ENCODE measurements at regions of chr4 and their contacts with region 1.

Region 1: DNA sequence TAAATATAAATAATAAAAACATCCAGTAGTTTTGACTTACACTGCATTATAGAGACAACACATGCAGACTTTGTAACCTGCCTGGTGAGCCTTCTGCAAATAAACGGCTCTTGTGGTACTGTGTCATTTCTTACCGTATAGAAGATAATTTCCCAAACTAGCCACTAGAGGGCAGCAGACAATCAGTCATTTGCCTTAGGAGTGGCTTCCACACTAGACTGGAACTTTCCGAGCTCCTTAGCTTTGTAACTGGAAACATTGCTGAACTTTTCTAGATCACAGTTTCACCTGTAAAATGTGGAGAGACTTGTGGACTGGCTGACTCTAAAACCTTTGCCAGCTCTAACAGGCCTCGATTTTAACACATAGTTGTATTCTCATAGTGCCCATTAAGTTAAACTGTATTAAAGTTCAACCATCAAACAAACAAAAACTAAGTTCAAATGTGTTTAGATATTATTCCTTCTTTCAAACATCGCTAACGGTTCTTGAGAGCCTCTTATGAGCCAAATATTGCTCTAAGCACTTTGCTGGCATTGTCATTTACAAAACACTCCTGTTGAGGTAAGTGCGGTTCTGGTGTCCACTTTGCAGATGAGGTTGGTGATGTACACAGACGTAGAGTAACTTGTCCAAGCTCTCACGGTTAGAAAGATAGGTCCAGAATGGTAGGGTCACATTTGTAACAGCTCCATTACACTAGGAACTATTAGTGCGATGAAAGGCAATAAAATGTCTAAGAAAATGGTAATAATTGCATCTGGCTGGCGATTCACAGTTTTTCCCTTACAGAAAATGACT is 345.5 kb downstream of the ANK2 start:
- DNase-seq: peak in 1 of 2 donors; percentile 32
- ATAC-seq: peak; percentile 95
- H3K4me3 ChIP-seq: no peak overlapping the region
- H3K27ac ChIP-seq: no peak overlapping the region
- H3K4me1 ChIP-seq: peaks cover 2 to 3% of the 10 kb centered on the region in 2 donors
- H3K27me3 ChIP-seq: no peaks in the 10 kb centered on the region

Region 2: GRCh38 chr4:113445286-113445685 is 50.4 kb after region 1 on chr4:
- intact Hi-C with region 1: loop called in 1 of 2 experiments (anchors 2 kb)
- DNase-seq: peak; percentile 74 to 75
- ATAC-seq: peak; percentile 93
- H3K4me3 ChIP-seq: no peak overlapping the region
- H3K27ac ChIP-seq: peak overlapping the region; percentile 67 to 82
- H3K4me1 ChIP-seq: peaks cover 2 to 3% of the 10 kb centered on the region in 2 donors
- H3K27me3 ChIP-seq: no peaks in the 10 kb centered on the region

Region 3: GRCh38 chr4:113502476-113502875 is 107.5 kb after region 1 on chr4:
- intact Hi-C with region 1: no loop called
- DNase-seq: no peak
- ATAC-seq: no peak
- H3K4me3 ChIP-seq: no peak overlapping the region
- H3K27ac ChIP-seq: no peak overlapping the region
- H3K4me1 ChIP-seq: peaks cover 0 to 2% of the 10 kb centered on the region in 2 donors
- H3K27me3 ChIP-seq: no peaks in the 10 kb centered on the region

Region 4: GRCh38 chr4:113539408-113539807 is 144.5 kb after region 1 on chr4:
- intact Hi-C with region 1: loop called (anchors 5 to 10 kb)
- DNase-seq: no peak
- ATAC-seq: no peak
- H3K4me3 ChIP-seq: no peak overlapping the region
- H3K27ac ChIP-seq: peak overlapping the region in 1 of 2 donors; percentile 28
- H3K4me1 ChIP-seq: peaks cover 0 to 6% of the 10 kb centered on the region in 2 donors
- H3K27me3 ChIP-seq: no peaks in the 10 kb centered on the region

Region 5: GRCh38 chr4:113761620-113762185 is 366.8 kb after region 1 on chr4 and contains the start of gene CAMK2D:
- intact Hi-C with region 1: loop called (anchors 2 to 5 kb)
- DNase-seq: peak; percentile 91 to 93
- ATAC-seq: peak; percentile 90
- H3K4me3 ChIP-seq: peak within 1 kb of the TSS; percentile 51 to 77
- H3K27ac ChIP-seq: peak within 1 kb of the TSS; percentile 64 to 90
- H3K4me1 ChIP-seq: no peaks in the 10 kb centered on the region
- H3K27me3 ChIP-seq: no peaks in the 10 kb centered on the region
- total RNA-seq, gene CAMK2D: 52.3 to 71.8 TPM

Region 6: DNA sequence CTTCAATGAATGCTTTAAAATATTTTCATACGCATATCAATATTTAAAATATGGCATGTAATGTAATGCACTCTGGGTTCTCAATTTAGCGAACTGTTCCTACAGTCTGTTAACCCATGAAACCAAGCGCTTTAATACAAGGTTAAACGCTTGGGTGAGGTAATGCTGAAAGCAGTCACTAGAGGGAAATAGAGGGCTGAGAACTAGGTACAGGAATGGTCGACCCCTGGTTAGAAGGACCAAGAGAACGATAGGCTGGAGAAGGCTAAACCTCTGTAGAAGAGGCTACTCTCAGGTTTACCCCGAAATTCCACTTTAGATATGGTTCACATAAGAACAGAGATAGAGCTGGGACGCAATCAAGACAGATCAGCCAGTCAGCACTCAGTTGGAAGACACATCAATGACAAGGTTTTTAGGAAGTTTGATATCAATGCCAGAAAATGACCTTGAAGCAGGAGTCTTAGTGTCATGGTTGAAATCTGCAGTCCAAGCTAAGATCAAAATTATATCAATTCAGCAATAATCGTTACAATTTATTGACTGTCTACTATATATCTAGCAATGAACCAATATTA is 557.6 kb after region 1 on chr4:
- intact Hi-C with region 1: loop called in 1 of 2 experiments (anchors 10 kb)
- DNase-seq: no peak
- ATAC-seq: peak; percentile 78
- H3K4me3 ChIP-seq: no peak overlapping the region
- H3K27ac ChIP-seq: no peak overlapping the region
- H3K4me1 ChIP-seq: no peaks in the 10 kb centered on the region
- H3K27me3 ChIP-seq: no peaks in the 10 kb centered on the region

Region 7: GRCh38 chr4:114077610-114078009 is 682.7 kb after region 1 on chr4:
- intact Hi-C with region 1: loop called in 1 of 2 experiments (anchors 10 kb)
- DNase-seq: no peak
- ATAC-seq: no peak
- H3K4me3 ChIP-seq: no peak overlapping the region
- H3K27ac ChIP-seq: no peak overlapping the region
- H3K4me1 ChIP-seq: no peaks in the 10 kb centered on the region
- H3K27me3 ChIP-seq: no peaks in the 10 kb centered on the region

Region 8: DNA sequence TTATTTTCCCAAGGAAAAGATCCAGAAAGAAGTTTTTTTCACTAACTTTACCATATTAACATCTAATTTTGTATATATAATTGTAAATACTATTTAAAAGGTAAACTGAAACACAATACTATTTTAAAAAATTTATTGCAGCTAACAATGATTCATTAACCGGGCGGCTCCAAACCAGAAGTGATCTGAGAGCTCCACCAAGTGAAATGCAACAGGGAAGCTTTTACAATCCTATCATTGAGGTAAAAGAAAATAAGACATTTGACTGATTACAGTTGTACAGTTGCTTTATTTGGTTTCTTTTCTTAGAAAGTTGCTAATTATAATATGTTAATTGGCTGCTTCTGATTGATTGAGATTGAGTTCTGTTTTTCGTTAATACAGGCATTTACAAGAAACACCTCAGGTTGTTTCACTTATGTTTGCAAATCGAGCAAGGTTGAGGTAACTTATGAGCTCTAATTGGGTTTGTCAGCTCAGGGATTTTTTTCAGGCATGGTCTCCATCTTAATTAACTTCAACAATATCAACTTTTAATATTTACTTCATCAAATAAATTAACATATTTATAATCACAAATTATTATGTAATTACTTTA is 983.5 kb after region 1 on chr4:
- intact Hi-C with region 1: loop called (anchors 5 to 10 kb)
- DNase-seq: no peak
- ATAC-seq: no peak
- H3K4me3 ChIP-seq: no peak overlapping the region
- H3K27ac ChIP-seq: no peak overlapping the region
- H3K4me1 ChIP-seq: no peaks in the 10 kb centered on the region
- H3K27me3 ChIP-seq: no peaks in the 10 kb centered on the region